ENCODE measurements at regions of chr11 and their contacts with region 1.

Region 1: DNA sequence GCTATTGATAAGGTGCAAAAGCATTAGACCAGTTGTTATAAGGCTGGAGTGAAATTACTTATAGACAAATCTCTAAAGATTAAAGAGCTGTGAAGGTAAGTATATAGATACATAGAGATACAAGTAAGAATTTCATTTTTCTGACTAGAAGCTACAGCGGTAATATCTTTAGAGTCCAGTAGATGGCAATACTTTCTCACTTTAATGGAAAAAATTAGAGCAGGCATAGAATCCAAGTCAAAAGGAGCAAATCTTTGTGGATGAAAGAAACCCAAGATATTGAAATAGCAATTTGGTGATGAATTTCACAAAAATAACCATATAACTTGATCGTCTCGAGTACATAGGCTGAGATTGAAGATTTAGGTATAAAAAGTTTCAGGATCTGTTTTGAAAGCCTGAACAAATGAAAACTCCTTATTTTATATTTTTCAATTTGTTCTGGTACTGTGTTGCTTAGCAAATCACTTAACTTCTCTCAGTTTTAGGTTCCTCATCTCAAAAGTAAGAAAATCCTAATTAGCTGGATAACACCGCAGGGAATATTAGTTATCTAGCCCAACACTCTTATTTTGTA is 81.9 kb downstream of the UVRAG start:
- DNase-seq: no peak
- H3K4me3 ChIP-seq: no peak overlapping the region
- H3K27ac ChIP-seq: no peak overlapping the region
- H3K4me1 ChIP-seq: no peaks in the 10 kb centered on the region
- H3K27me3 ChIP-seq: no peaks in the 10 kb centered on the region
- CTCF ChIP-seq: peak; percentile 54 to 84 (median 72)
- POLR2A ChIP-seq: no peak

Region 2: DNA sequence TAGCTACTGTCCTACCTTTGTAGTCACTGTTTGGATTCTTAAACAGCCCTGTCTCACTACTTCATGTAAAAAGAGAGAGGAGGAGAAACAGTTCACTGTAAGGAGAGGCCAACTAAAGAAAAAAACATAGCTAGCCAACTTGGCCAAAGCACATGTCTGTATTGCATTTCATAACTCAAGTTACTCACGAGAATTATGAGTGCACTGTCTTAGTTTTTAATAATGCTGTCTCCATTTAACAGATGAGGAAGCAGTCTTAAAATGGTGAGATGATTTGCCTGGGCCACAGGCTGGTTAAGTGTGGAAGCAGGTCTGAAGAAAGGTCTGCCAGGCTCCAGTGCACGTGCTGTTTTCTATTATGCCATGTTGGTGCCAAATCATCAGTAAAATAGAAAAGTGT is 22.6 kb after region 1 on chr11:
- intact Hi-C with region 1: loop called (anchors 2 kb)
- DNase-seq: no peak
- H3K4me3 ChIP-seq: no peak overlapping the region
- H3K27ac ChIP-seq: peak overlapping the region in 1 of 2 donors; percentile 29
- H3K4me1 ChIP-seq: peaks cover 4% of the 10 kb centered on the region
- H3K27me3 ChIP-seq: no peaks in the 10 kb centered on the region
- CTCF ChIP-seq: no peak
- POLR2A ChIP-seq: no peak

Region 3: GRCh38 chr11:76152086-76152681 is 255.3 kb after region 1 on chr11:
- intact Hi-C with region 1: loop called (anchors 2 kb)
- DNase-seq: peak; percentile 79
- H3K4me3 ChIP-seq: peak overlapping the region in 1 of 2 donors; percentile 12
- H3K27ac ChIP-seq: no peak overlapping the region
- H3K4me1 ChIP-seq: peaks cover 2% of the 10 kb centered on the region
- H3K27me3 ChIP-seq: no peaks in the 10 kb centered on the region
- CTCF ChIP-seq: peak; percentile 78 to 95 (median 90)
- POLR2A ChIP-seq: no peak

Region 4: DNA sequence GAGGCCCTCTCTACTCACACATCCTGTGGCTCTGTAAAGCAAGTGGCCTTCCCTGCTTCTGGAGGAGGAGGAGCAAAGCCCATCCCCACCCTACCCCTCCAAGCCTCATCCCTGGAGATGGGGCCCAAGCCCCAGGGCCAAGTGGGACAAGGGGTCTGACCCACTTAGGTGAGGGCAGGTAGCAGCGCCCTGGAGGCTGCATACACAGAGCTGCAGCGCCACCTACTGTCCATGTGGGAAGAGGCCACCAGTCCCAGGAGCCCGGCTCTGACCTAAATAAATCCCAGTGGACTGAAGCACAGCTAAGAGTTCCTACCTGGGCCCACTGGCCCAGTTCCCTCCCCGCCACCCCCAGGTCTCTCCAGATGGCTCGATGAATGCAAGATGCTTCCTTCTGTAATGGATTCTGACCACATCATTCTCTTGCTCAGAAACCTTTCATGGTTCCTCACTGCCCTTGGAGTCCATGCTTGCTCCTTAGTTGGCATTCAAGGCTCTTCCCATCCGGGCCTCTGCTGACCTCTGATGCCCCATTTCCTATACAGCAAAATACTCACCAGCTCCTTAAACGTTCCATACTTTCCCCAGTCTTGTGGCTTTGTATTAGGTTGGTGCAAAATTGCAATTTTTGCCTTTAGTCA is 421.9 kb after region 1 on chr11:
- intact Hi-C with region 1: loop called (anchors 5 kb)
- DNase-seq: peak; percentile 78
- H3K4me3 ChIP-seq: no peak overlapping the region
- H3K27ac ChIP-seq: no peak overlapping the region
- H3K4me1 ChIP-seq: no peaks in the 10 kb centered on the region
- H3K27me3 ChIP-seq: no peaks in the 10 kb centered on the region
- CTCF ChIP-seq: peak; percentile 55 to 94 (median 90)
- POLR2A ChIP-seq: no peak